ENCODE measurements at regions of chr5 and their contacts with region 1.

Region 1: GRCh38 chr5:134225618-134226440 is at the start of gene PPP2CA:
- DNase-seq: peak; percentile 98 to 100 (median 99)
- ATAC-seq: peak; percentile 80
- H3K4me3 ChIP-seq: peak within 1 kb of the TSS; percentile 83 to 87
- H3K4me3 Mint-ChIP-seq: peak within 1 kb of the TSS; percentile 96
- H3K27ac ChIP-seq: peak within 1 kb of the TSS; percentile 95 to 96
- H3K27ac Mint-ChIP-seq: peak within 1 kb of the TSS; percentile 98
- H3K4me1 ChIP-seq: peaks cover 45% of the 10 kb centered on the region
- H3K4me1 Mint-ChIP-seq: peaks cover 50% of the 10 kb centered on the region
- H3K27me3 ChIP-seq: no peaks in the 10 kb centered on the region
- H3K27me3 Mint-ChIP-seq: no peaks in the 10 kb centered on the region
- CTCF ChIP-seq: no peak
- total RNA-seq, gene PPP2CA: 233 to 260 TPM

Region 2: GRCh38 chr5:133968049-133968980 is 257.5 kb before region 1 on chr5 and contains the start of gene C5orf15:
- CTCF ChIA-PET with region 1: no interaction called
- POLR2A ChIA-PET with region 1: no interaction called
- intact Hi-C with region 1: loop called in 1 of 2 experiments (anchors 2 kb)
- DNase-seq: peak; percentile 76 to 98 (median 91)
- ATAC-seq: peak; percentile 93
- H3K4me3 ChIP-seq: peak within 1 kb of the TSS; percentile 85 to 93
- H3K4me3 Mint-ChIP-seq: peak within 1 kb of the TSS; percentile 93
- H3K27ac ChIP-seq: peak within 1 kb of the TSS; percentile 79 to 94
- H3K27ac Mint-ChIP-seq: peak within 1 kb of the TSS; percentile 97
- H3K4me1 ChIP-seq: peaks cover 23% of the 10 kb centered on the region
- H3K4me1 Mint-ChIP-seq: peaks cover 49% of the 10 kb centered on the region
- H3K27me3 ChIP-seq: no peaks in the 10 kb centered on the region
- H3K27me3 Mint-ChIP-seq: no peaks in the 10 kb centered on the region
- CTCF ChIP-seq: no peak
- total RNA-seq, gene C5orf15: 12.4 to 13.0 TPM

Region 3: DNA sequence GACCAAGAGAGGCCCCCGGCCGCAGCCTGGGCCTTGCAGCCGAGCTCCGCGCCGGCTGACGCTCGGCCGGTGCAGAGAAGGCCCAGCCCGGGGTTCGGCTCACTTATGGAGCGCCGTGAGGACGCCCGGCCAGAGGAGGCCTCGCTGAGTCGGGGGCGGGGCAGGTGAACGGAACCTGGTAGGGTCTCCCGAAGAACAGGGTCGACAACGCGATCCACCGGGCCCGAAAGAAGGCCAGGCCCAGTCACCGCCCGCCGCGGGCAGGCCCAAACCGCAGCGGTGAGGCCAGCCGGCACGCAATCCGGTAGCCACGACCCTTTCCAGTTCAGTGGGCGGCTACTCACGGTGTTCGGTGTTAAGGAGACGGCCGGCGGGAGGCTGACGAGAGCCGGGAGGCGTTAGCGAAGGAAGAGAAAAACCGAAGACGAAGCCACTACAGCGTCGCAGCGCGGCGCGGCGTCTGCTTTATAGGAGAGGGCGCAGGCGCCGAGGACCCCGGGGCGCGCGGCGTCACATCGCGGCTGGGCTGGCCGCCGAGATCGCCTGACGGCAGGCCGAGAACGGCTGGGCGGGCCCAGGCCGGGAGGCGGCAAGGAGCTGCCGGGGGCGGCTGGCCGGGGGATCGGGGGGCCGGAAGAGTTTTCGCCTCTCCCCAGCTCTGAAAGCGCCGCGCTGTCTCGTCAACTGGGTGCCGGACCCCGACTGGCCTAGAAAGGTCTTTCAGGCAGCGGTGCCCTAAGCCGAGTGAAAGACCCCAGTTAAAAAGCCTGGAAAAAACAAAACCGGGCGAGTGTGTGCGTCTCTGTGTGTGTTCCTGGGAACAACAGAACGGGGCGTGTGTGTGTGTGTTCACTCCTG is 49.1 kb before region 1 on chr5 and contains the start of gene SKP1:
- CTCF ChIA-PET with region 1: no interaction called
- POLR2A ChIA-PET with region 1: interaction called, 33 read pairs
- intact Hi-C with region 1: loop called (anchors 1 kb)
- DNase-seq: peak; percentile 79 to 93 (median 85)
- ATAC-seq: peak; percentile 88
- H3K4me3 ChIP-seq: peak within 1 kb of the TSS; percentile 98 to 99
- H3K4me3 Mint-ChIP-seq: peak within 1 kb of the TSS; percentile 98
- H3K27ac ChIP-seq: peak within 1 kb of the TSS; percentile 98
- H3K27ac Mint-ChIP-seq: peak within 1 kb of the TSS; percentile 99
- H3K4me1 ChIP-seq: peaks cover 31% of the 10 kb centered on the region
- H3K4me1 Mint-ChIP-seq: peaks cover 34% of the 10 kb centered on the region
- H3K27me3 ChIP-seq: no peaks in the 10 kb centered on the region
- H3K27me3 Mint-ChIP-seq: no peaks in the 10 kb centered on the region
- CTCF ChIP-seq: no peak
- total RNA-seq, gene SKP1: 290 to 301 TPM

Region 4: GRCh38 chr5:134209477-134210240 is 16.2 kb before region 1 on chr5:
- CTCF ChIA-PET with region 1: interaction called, 8 read pairs
- POLR2A ChIA-PET with region 1: interaction called, 8 read pairs
- intact Hi-C with region 1: loop called (anchors 2 kb)
- DNase-seq: no peak
- ATAC-seq: no peak
- H3K4me3 ChIP-seq: no peak overlapping the region
- H3K4me3 Mint-ChIP-seq: peak overlapping the region; percentile 23
- H3K27ac ChIP-seq: no peak overlapping the region
- H3K27ac Mint-ChIP-seq: no peak overlapping the region
- H3K4me1 ChIP-seq: peaks cover 62% of the 10 kb centered on the region
- H3K4me1 Mint-ChIP-seq: peaks cover 71% of the 10 kb centered on the region
- H3K27me3 ChIP-seq: no peaks in the 10 kb centered on the region
- H3K27me3 Mint-ChIP-seq: no peaks in the 10 kb centered on the region
- CTCF ChIP-seq: no peak

Region 5: GRCh38 chr5:134411546-134412266 is 185.9 kb after region 1 on chr5 and contains the start of gene CDKN2AIPNL:
- CTCF ChIA-PET with region 1: no interaction called
- POLR2A ChIA-PET with region 1: no interaction called
- intact Hi-C with region 1: loop called in 1 of 2 experiments (anchors 5 kb)
- DNase-seq: peak; percentile 81 to 95 (median 91)
- ATAC-seq: peak; percentile 99
- H3K4me3 ChIP-seq: peak within 1 kb of the TSS; percentile 77 to 84
- H3K4me3 Mint-ChIP-seq: peak within 1 kb of the TSS; percentile 90
- H3K27ac ChIP-seq: peak within 1 kb of the TSS; percentile 65 to 66
- H3K27ac Mint-ChIP-seq: peak within 1 kb of the TSS; percentile 90
- H3K4me1 ChIP-seq: peaks cover 23% of the 10 kb centered on the region
- H3K4me1 Mint-ChIP-seq: peaks cover 38% of the 10 kb centered on the region
- H3K27me3 ChIP-seq: no peaks in the 10 kb centered on the region
- H3K27me3 Mint-ChIP-seq: no peaks in the 10 kb centered on the region
- CTCF ChIP-seq: peak; percentile 73
- total RNA-seq, gene CDKN2AIPNL: 14.7 to 15.5 TPM

Region 6: GRCh38 chr5:134738133-134738962 is 512.5 kb after region 1 on chr5 and contains the start of gene CAMLG:
- CTCF ChIA-PET with region 1: no interaction called
- POLR2A ChIA-PET with region 1: no interaction called
- intact Hi-C with region 1: loop called (anchors 5 kb)
- DNase-seq: peak; percentile 94 to 99 (median 97)
- ATAC-seq: peak; percentile 97
- H3K4me3 ChIP-seq: peak within 1 kb of the TSS; percentile 89 to 91
- H3K4me3 Mint-ChIP-seq: peak within 1 kb of the TSS; percentile 86
- H3K27ac ChIP-seq: peak within 1 kb of the TSS; percentile 79 to 92
- H3K27ac Mint-ChIP-seq: peak within 1 kb of the TSS; percentile 95
- H3K4me1 ChIP-seq: peaks cover 20% of the 10 kb centered on the region
- H3K4me1 Mint-ChIP-seq: peaks cover 35% of the 10 kb centered on the region
- H3K27me3 ChIP-seq: no peaks in the 10 kb centered on the region
- H3K27me3 Mint-ChIP-seq: no peaks in the 10 kb centered on the region
- CTCF ChIP-seq: peak; percentile 81
- total RNA-seq, gene CAMLG: 52.3 to 56.2 TPM